Aorta (tissue), 5 donors: ENCODE measurements at regions of chr9 and their contacts with region 1.

Region 1: GRCh38 chr9:114738581-114739316 is 56.8 kb upstream of the TEX48 start:
- DNase-seq: peak in 1 of 2 donors; percentile 80
- ATAC-seq: peak; percentile 93
- H3K4me3 ChIP-seq: no peak overlapping the region
- H3K27ac ChIP-seq: no peak overlapping the region
- H3K4me1 ChIP-seq: no peaks in the 10 kb centered on the region
- H3K27me3 ChIP-seq: peaks cover 0 to 2% of the 10 kb centered on the region in 2 donors

Region 2: DNA sequence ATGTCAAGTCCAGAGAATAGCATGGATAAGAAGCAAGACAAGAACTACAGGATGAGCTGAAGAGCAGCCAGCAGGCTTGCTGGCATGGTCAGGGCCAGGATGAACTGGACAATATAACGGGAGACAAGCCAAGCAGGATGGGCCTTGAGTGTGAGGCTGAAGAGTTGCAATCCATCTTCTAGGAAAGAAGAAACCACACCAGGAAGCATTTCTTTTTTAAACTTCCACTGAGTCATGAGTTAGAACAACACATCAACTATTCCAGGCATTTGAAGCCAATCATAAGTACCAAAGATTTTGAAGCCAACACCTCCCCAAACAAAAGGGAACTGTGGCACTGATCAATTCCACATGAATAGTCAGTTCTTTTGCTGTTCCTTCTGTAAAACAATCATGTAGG is 1560.7 kb before region 1 on chr9:
- intact Hi-C with region 1: no loop called
- DNase-seq: no peak
- ATAC-seq: no peak
- H3K4me3 ChIP-seq: no peak overlapping the region
- H3K27ac ChIP-seq: no peak overlapping the region
- H3K4me1 ChIP-seq: no peaks in the 10 kb centered on the region
- H3K27me3 ChIP-seq: no peaks in the 10 kb centered on the region

Region 3: DNA sequence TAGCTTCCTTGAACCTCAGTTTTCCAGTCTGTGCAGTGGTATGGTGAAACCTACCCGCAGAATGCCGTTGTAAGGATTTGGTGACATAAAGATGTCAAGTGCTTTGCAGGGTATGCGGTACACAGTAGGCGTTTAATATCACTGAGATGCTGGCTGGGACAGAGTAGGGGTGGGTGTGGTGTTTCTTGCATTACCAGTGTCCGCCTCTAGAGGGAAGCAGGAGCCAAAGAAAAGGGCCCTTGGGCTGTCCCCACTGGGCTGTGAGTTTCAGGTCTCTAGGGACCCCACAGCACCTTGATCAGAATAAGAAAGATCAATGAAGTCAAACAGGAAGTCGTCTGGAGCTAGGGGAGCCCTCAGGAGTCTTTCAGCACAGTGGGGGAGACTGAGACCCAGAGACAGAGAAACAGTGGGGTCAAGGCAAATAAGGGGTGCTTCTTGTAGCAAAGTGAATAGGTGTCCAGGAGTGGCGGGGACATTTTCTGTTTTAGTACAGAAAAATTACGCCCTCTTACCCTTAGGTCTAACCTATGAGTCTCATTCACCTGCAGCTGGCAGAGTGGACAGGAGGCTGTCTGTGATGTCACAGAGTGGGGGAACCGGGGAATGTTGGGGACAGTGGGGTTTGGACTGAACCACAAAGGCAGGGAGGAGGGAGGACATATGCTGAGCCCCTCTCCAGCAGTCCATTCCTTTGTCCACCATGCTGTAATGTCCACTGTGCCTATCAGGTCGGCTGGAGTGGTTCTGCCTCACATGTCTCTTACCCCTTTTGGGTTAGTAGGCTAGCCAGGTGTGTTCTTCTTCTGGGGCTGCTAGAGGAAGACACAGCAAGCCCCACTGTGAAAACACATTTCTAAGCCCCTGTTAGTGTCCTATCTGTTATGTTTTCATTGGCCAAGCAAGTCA is 76.4 kb before region 1 on chr9:
- intact Hi-C with region 1: loop called in 1 of 2 experiments (anchors 5 kb)
- DNase-seq: no peak
- ATAC-seq: peak; percentile 68
- H3K4me3 ChIP-seq: no peak overlapping the region
- H3K27ac ChIP-seq: no peak overlapping the region
- H3K4me1 ChIP-seq: no peaks in the 10 kb centered on the region
- H3K27me3 ChIP-seq: no peaks in the 10 kb centered on the region

Region 4: GRCh38 chr9:114769624-114770023 is 30.9 kb after region 1 on chr9:
- intact Hi-C with region 1: no loop called
- DNase-seq: no peak
- ATAC-seq: no peak
- H3K4me3 ChIP-seq: no peak overlapping the region
- H3K27ac ChIP-seq: no peak overlapping the region
- H3K4me1 ChIP-seq: no peaks in the 10 kb centered on the region
- H3K27me3 ChIP-seq: no peaks in the 10 kb centered on the region

Region 5: GRCh38 chr9:114906908-114907571 is 168.3 kb after region 1 on chr9:
- intact Hi-C with region 1: loop called (anchors 2 to 5 kb)
- DNase-seq: no peak
- ATAC-seq: peak; percentile 60
- H3K4me3 ChIP-seq: no peak overlapping the region
- H3K27ac ChIP-seq: no peak overlapping the region
- H3K4me1 ChIP-seq: no peaks in the 10 kb centered on the region
- H3K27me3 ChIP-seq: no peaks in the 10 kb centered on the region

Region 6: DNA sequence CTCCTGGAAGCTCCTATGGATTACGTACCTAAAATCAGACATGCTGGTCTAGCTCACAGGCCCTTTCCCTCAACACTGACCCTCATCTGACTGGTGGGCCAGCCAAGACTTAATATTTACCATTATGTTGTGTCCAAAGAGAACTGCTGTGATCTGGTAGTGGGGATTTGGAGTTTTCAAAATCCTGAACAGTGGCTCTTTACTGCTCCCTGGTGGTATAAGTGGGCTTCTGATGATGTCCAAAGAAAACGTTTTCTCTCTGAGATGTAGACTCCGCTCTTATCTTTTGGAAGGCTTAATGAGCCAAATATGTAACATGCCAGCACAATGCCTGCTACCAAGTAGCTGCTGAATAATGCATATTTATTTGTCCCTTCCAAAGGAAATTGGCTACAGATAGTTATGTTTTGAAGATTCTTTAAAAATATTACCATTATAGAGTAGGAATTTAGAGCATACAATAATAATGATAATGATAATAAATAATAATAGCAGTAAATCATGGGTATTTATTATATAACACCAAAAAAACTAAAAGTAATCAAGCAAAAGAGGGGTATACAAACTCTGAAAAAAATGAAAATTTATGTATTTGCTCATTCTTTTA is 785.8 kb after region 1 on chr9:
- intact Hi-C with region 1: loop called in 1 of 2 experiments (anchors 5 kb)
- DNase-seq: no peak
- ATAC-seq: peak; percentile 85
- H3K4me3 ChIP-seq: no peak overlapping the region
- H3K27ac ChIP-seq: no peak overlapping the region
- H3K4me1 ChIP-seq: peaks cover 0 to 2% of the 10 kb centered on the region in 2 donors
- H3K27me3 ChIP-seq: no peaks in the 10 kb centered on the region